ENCODE measurements at regions of chr11 and their contacts with region 1.

Region 1: DNA sequence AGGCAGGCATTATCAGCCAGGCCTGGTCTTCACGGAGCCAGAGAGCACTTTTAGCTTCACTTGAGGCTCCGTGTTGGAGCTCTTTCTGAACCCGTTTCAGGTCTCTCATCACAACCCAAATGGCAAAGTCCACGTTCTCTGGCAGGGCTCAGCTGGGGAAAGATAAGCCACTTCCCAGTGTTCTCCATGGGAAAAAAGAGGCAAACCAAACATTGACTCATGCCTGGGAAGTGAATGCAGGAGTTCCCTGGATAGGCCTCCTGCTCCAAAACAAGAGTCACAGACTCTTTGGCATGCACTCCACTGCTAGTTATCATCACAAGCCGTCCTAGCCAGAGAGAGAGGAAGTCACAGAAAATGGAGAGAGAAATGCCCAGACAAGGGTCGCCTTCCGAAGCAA is 11.6 kb downstream of the OPCML start:
- DNase-seq: peak in 3 of 5 donors; percentile 29 to 49 (median 46)
- ATAC-seq: peak in 3 of 4 donors; percentile 59 to 77 (median 64)
- H3K4me3 ChIP-seq: no peak overlapping the region
- H3K27ac ChIP-seq: peak overlapping the region in 5 of 12 donors; percentile 17 to 52 (median 26)
- H3K4me1 ChIP-seq: peaks cover 0 to 56% (median 15%) of the 10 kb centered on the region in 12 donors
- H3K27me3 ChIP-seq: no peaks in the 10 kb centered on the region
- CTCF ChIP-seq: no peak
- POLR2A ChIP-seq: no peak

Region 2: DNA sequence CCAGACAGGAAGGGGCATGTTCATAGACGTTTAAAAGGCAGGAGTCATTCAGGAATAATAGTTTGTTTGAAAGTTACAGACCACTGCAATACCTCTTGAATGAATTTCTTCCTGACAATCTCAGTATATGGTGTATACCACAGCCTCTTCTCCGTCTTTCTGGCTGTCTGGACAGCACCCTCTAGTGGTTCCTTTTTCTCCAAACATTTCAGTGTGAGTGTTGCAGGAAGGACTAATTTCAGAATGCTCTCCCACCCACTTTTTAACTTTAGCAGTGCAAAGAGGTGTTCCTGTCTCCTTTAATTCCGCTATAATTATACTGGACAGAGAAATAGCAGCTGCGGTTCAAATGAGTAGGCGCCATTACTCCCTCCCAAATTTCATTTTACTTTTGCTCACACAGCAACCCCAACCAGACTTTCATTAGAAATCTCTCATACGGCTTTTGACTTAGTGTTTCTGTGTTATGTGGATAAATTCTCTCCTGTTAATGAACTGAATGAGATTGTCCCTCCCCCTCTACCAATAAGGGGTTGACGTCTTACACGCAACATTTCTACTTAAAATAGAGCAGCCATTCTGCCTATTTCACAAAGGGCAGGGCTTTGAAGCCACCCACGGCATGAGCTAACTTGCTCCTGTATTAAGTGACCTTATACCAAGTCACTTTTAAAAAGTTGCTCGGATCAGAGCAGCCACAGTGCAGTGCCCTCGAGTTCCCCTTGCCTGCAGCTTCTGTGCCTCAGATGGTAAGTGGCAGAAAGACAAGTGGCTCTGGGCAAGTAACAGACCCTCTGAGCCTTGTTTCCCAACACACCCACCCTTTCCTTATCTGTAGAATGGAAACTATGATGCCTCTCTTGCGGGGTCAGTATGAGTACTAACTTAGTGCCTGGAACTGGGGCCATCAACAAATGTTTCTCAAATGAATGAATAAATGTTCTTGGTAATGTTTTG is 357.0 kb before region 1 on chr11:
- intact Hi-C with region 1: loop called in 1 of 10 experiments (anchors 10 kb)
- DNase-seq: peak in 2 of 5 donors; percentile 30 to 45
- ATAC-seq: peak; percentile 64 to 93 (median 82)
- H3K4me3 ChIP-seq: peak overlapping the region in 3 of 12 donors; percentile 7 to 35 (median 24)
- H3K27ac ChIP-seq: peak overlapping the region in 3 of 12 donors; percentile 25 to 53 (median 39)
- H3K4me1 ChIP-seq: peaks cover 0 to 8% (median 0%) of the 10 kb centered on the region in 12 donors
- H3K27me3 ChIP-seq: peaks cover 0 to 13% (median 0%) of the 10 kb centered on the region in 9 donors
- CTCF ChIP-seq: peak; percentile 59 to 85 (median 76)
- POLR2A ChIP-seq: no peak

Region 3: GRCh38 chr11:133553885-133554740 is 33.4 kb after region 1 on chr11:
- intact Hi-C with region 1: no loop called
- DNase-seq: no peak
- ATAC-seq: peak in 2 of 4 donors; percentile 52 to 62
- H3K4me3 ChIP-seq: no peak overlapping the region
- H3K27ac ChIP-seq: no peak overlapping the region
- H3K4me1 ChIP-seq: peaks cover 0 to 3% (median 0%) of the 10 kb centered on the region in 12 donors
- H3K27me3 ChIP-seq: peaks cover 0 to 30% (median 0%) of the 10 kb centered on the region in 9 donors
- CTCF ChIP-seq: no peak
- POLR2A ChIP-seq: no peak

Region 4: DNA sequence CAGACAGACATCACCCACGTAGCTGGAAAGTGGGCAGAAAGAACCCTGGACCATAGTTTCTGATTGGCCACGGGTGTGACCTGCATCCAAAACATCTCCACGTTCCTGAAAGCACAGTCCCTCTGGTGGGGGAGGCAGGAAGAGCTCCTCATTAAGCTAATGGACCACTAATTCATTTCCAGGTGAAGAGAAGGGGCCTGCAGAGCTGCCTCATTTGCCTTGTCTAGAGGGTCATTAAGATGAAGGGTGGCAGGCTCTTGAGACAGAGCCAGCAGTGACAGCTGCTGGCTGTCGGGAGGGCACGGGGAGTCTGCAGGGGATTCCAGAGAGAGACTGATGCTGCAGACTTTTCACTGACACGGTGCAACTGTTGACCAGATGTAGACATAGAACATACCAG is 161.2 kb after region 1 on chr11:
- intact Hi-C with region 1: loop called in 1 of 10 experiments (anchors 10 kb)
- DNase-seq: no peak
- ATAC-seq: peak in 2 of 4 donors; percentile 18 to 33
- H3K4me3 ChIP-seq: no peak overlapping the region
- H3K27ac ChIP-seq: no peak overlapping the region
- H3K4me1 ChIP-seq: peaks cover 0 to 9% (median 0%) of the 10 kb centered on the region in 12 donors
- H3K27me3 ChIP-seq: peaks cover 0 to 25% (median 0%) of the 10 kb centered on the region in 9 donors
- CTCF ChIP-seq: peak in 1 of 12 donors; percentile 16
- POLR2A ChIP-seq: no peak

Region 5: GRCh38 chr11:133697161-133697560 is 176.5 kb after region 1 on chr11:
- intact Hi-C with region 1: loop called in 1 of 10 experiments (anchors 10 kb)
- DNase-seq: peak in 4 of 5 donors; percentile 30 to 68 (median 41)
- ATAC-seq: peak; percentile 79 to 87 (median 84)
- H3K4me3 ChIP-seq: no peak overlapping the region
- H3K27ac ChIP-seq: peak overlapping the region in 11 of 12 donors; percentile 15 to 87 (median 70)
- H3K4me1 ChIP-seq: peaks cover 0 to 12% (median 0%) of the 10 kb centered on the region in 12 donors
- H3K27me3 ChIP-seq: no peaks in the 10 kb centered on the region
- CTCF ChIP-seq: no peak
- POLR2A ChIP-seq: no peak

Region 6: GRCh38 chr11:133834682-133835592 is 314.2 kb after region 1 on chr11:
- intact Hi-C with region 1: loop called in 1 of 10 experiments (anchors 10 kb)
- DNase-seq: peak in 2 of 5 donors; percentile 44 to 50
- ATAC-seq: peak in 3 of 4 donors; percentile 69 to 90 (median 85)
- H3K4me3 ChIP-seq: no peak overlapping the region
- H3K27ac ChIP-seq: no peak overlapping the region
- H3K4me1 ChIP-seq: peaks cover 0 to 6% (median 0%) of the 10 kb centered on the region in 12 donors
- H3K27me3 ChIP-seq: peaks cover 0 to 16% (median 0%) of the 10 kb centered on the region in 9 donors
- CTCF ChIP-seq: peak; percentile 16 to 75 (median 65)
- POLR2A ChIP-seq: no peak

Region 7: DNA sequence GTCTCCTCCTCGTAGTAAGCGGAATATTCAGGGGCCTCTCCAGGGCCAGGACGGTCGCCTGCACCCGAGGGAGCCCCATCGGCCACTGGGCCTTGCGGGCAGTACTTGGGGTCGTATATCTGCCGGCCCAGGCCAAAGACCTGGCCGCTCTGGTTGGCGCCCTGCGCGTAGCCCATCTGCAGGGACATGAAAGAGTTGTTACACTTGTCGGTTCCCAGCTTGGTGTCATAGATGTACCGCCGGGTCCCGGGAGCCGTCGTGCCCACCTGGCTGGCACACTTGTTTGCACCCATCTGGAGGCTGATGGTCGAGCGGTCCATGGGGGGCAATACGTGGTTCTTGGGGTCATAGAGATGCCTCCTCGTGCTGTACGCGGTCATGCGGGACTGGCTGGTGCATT is 344.0 kb after region 1 on chr11:
- intact Hi-C with region 1: no loop called
- DNase-seq: no peak
- ATAC-seq: peak in 1 of 4 donors; percentile 20
- H3K4me3 ChIP-seq: no peak overlapping the region
- H3K27ac ChIP-seq: no peak overlapping the region
- H3K4me1 ChIP-seq: no peaks in the 10 kb centered on the region
- H3K27me3 ChIP-seq: peaks cover 0 to 18% (median 0%) of the 10 kb centered on the region in 9 donors
- CTCF ChIP-seq: no peak
- POLR2A ChIP-seq: no peak